ENCODE measurements at regions of chr3 and their contacts with region 1.

Region 1: DNA sequence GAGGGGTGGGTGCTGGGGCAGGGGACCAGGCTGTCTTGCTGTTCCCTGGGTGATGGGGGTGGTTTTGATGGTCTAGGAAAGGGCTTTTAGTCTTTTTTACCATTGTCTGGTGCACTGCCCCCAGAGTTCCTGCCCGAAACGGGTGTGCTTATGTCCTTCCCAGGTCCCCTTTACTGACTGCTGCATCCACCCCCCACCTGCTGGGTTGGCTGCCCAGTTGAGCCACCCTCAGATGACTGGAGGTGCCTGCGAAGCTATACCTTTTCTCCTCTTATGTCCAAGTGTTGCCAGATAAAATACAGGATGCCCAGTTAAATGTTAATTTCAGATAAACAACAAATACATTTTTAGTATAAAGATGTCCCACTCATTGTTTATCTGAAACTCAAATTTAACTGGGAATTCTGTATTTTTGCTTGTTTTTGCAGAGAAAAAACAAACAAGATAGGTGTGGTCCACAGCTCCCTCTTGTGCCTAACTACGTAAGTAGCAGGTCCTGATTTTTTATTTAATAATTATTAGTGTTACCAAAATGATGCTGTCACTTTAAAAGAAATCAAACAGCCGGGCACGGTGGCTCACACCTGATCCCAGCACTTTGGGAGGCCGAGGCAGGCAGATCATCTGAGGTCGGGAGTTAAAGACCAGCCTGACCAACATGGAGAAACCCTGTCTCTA is 6.1 kb upstream of the RPP14 start:
- DNase-seq: no peak
- ATAC-seq: peak; percentile 59 to 72 (median 66)
- H3K4me3 ChIP-seq: no peak overlapping the region
- H3K27ac ChIP-seq: no peak overlapping the region
- H3K4me1 ChIP-seq: peaks cover 0 to 6% (median 0%) of the 10 kb centered on the region in 4 donors
- H3K27me3 ChIP-seq: no peaks in the 10 kb centered on the region
- CTCF ChIP-seq: peak; percentile 62 to 78 (median 74)
- POLR2A ChIP-seq: no peak

Region 2: DNA sequence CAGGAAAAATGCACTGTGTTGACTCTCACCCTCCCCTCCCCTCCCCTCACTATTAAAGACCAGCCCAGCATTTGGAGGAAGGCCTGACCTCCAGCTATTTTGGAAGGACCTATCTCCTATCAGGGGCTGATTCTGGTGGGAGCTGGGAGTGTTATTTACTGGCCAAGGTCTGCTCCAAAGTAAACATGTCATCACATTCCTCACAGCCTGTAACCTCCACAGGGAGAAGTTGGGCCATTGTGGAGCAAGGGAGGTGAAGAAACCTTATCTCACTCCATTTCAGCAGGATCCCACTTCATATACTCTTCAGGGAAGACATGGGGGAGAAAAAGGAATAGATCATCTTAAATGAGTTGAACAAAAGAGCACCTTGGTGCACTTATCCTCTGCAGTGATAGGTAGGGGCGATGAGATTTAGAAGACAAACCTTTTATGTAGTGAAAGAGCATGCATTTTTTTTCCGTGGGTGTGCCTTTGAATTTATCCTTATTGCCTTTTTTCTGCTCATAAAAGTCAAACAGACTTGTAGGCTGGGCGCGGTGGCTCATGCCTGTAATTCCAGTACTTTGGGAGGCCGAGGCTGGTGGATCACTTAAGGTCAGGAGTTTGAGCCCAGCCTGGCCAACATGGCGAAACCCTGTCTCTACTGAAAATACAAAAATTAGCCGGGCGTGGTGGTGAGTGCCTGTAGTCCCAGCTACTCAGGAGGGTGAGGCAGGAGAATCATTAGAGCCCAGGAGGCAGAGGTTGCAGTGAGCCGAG is 307.3 kb before region 1 on chr3:
- intact Hi-C with region 1: no loop called
- DNase-seq: no peak
- ATAC-seq: peak; percentile 11 to 55 (median 39)
- H3K4me3 ChIP-seq: no peak overlapping the region
- H3K27ac ChIP-seq: no peak overlapping the region
- H3K4me1 ChIP-seq: no peaks in the 10 kb centered on the region
- H3K27me3 ChIP-seq: no peaks in the 10 kb centered on the region
- CTCF ChIP-seq: no peak
- POLR2A ChIP-seq: no peak

Region 3: DNA sequence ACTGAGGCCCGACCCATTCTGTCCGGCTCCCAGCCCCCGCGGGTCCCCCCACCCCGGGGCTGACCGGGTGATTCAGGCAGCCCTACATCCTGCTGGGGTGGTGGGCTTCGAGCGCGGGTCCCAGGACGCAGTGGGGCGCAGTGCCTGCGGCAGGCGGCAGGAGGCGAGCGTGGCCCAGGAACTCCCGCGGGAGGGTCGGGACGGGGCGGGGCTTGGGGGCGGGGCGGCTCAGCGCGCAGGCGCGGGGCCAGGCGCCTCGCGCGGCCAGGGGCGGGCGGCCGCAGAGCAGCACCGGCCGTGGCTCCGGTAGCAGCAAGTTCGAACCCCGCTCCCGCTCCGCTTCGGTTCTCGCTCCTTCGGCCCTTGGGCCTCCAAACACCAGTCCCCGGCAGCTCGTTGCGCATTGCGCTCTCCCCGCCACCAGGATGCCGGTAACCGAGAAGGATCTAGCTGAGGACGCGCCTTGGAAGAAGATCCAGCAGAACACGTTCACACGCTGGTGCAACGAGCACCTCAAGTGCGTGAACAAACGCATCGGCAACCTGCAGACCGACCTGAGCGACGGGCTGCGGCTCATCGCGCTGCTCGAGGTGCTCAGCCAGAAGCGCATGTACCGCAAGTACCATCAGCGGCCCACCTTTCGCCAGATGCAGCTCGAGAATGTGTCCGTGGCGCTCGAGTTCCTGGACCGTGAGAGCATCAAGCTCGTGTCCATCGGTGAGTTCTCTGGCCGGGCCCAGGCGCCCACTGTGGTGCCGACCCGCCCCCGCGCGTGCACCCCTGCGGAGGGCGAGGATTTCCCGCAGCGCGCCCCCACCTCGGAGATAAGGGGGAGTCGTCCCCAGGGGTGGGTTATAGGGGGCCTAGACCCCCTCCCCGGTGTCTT is 291.6 kb before region 1 on chr3 and contains the start of gene FLNB:
- intact Hi-C with region 1: loop called (anchors 10 kb)
- DNase-seq: peak; percentile 80 to 81 (median 80)
- ATAC-seq: peak; percentile 79 to 87 (median 82)
- H3K4me3 ChIP-seq: peak within 1 kb of the TSS; percentile 85 to 97 (median 92)
- H3K27ac ChIP-seq: peak within 1 kb of the TSS; percentile 83 to 94 (median 90)
- H3K4me1 ChIP-seq: peaks cover 0 to 28% (median 12%) of the 10 kb centered on the region in 4 donors
- H3K27me3 ChIP-seq: no peaks in the 10 kb centered on the region
- CTCF ChIP-seq: peak; percentile 57 to 79 (median 66)
- POLR2A ChIP-seq: peak; percentile 89
- total RNA-seq, gene FLNB: 48.4 to 109 (median 97.8) TPM

Region 4: GRCh38 chr3:58177747-58178527 is 122.0 kb before region 1 on chr3:
- intact Hi-C with region 1: loop called in 1 of 2 experiments (anchors 5 kb)
- DNase-seq: peak; percentile 93 to 94 (median 93)
- ATAC-seq: peak; percentile 66 to 78 (median 70)
- H3K4me3 ChIP-seq: peak overlapping the region; percentile 26 to 49 (median 32)
- H3K27ac ChIP-seq: peak overlapping the region in 1 of 3 donors; percentile 90
- H3K4me1 ChIP-seq: peaks cover 3 to 68% (median 26%) of the 10 kb centered on the region in 4 donors
- H3K27me3 ChIP-seq: no peaks in the 10 kb centered on the region
- CTCF ChIP-seq: peak; percentile 93 to 97 (median 94)
- POLR2A ChIP-seq: no peak

Region 5: DNA sequence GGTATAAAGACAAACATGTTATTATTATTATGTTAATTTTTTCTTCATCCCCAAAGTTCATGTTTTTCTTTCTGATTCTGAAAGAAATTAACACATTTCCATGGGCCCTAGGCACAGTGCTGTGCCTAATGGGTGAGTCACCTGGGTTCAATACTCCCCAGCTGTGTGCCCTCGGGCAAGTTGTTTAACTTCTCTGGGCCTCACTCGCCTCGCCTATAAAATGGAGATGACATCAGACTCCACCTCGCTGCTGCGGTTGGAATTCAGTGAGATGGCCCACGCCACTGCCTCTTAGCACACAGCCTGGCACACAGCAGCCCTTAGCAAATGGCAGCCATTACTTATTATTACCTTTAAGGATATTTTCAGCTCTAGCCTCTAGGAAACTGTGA is 111.8 kb before region 1 on chr3:
- intact Hi-C with region 1: loop called (anchors 5 kb)
- DNase-seq: no peak
- ATAC-seq: peak in 1 of 4 donors; percentile 3
- H3K4me3 ChIP-seq: no peak overlapping the region
- H3K27ac ChIP-seq: peak overlapping the region; percentile 28 to 83 (median 38)
- H3K4me1 ChIP-seq: peaks cover 3 to 54% (median 27%) of the 10 kb centered on the region in 4 donors
- H3K27me3 ChIP-seq: no peaks in the 10 kb centered on the region
- CTCF ChIP-seq: no peak
- POLR2A ChIP-seq: no peak

Region 6: GRCh38 chr3:58222094-58222724 is 77.8 kb before region 1 on chr3:
- intact Hi-C with region 1: loop called (anchors 10 kb)
- DNase-seq: peak in 1 of 3 donors; percentile 17
- ATAC-seq: no peak
- H3K4me3 ChIP-seq: no peak overlapping the region
- H3K27ac ChIP-seq: no peak overlapping the region
- H3K4me1 ChIP-seq: peaks cover 0 to 8% (median 4%) of the 10 kb centered on the region in 4 donors
- H3K27me3 ChIP-seq: no peaks in the 10 kb centered on the region
- CTCF ChIP-seq: no peak
- POLR2A ChIP-seq: no peak